HEK293T (cell line): ENCODE measurements at regions of chr20 and their contacts with region 1.

Region 1: GRCh38 chr20:50749758-50750046 is 18.3 kb downstream of the PARD6B start:
- DNase-seq: no peak

Region 2: GRCh38 chr20:50635667-50636503 is 113.8 kb before region 1 on chr20:
- CTCF ChIA-PET with region 1: interaction called, 12 read pairs
- POLR2A ChIA-PET with region 1: no interaction called
- DNase-seq: peak; percentile 91

Region 3: GRCh38 chr20:50856036-50856756 is 106.5 kb after region 1 on chr20:
- CTCF ChIA-PET with region 1: no interaction called
- POLR2A ChIA-PET with region 1: no interaction called
- DNase-seq: no peak